CD8-positive, alpha-beta T cell (primary cell): ENCODE measurements at regions of chr13 and their contacts with region 1.

Region 1: DNA sequence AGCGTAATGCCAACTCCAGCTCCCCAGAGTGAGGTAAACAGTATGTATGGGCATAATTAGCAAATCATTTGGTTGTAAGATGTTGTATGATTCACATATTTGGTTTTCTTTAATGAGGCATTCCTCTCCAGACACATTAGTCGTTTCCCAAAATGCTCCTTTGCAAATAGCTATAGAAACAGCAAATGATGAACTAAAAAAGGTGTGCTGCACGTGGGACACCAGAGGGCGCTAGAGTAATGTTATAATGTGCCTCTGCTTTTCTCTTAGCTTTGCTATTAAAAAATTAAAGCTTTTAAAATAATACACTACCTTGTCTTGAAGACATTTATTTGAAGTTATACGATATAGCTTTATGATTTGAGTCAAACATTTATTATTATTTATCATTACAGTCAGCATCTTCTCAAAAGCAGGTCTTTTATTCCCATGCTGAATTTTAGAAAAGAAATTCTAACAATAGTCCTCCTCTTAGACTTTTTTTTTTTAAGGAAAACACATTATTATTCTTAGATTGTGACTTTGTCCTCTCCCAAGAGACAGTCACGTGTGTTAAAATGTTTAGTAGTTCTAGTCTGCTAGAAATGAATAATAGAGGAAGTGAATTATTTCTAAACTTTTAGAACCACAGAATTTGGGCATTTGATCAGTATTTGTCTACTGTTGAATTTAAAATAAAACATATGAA is 121.6 kb upstream of the FRY start:
- DNase-seq: peak; percentile 3 to 73 (median 53)
- ATAC-seq: peak; percentile 23
- H3K4me3 ChIP-seq: no peak overlapping the region
- H3K4me3 Mint-ChIP-seq: no peak overlapping the region
- H3K27ac ChIP-seq: no peak overlapping the region
- H3K27ac Mint-ChIP-seq: no peak overlapping the region
- H3K4me1 ChIP-seq: no peaks in the 10 kb centered on the region
- H3K4me1 Mint-ChIP-seq: no peaks in the 10 kb centered on the region
- H3K27me3 ChIP-seq: no peaks in the 10 kb centered on the region
- H3K27me3 Mint-ChIP-seq: peaks cover 12% of the 10 kb centered on the region
- CTCF ChIP-seq: peak; percentile 98

Region 2: GRCh38 chr13:32310134-32310706 is 400.2 kb after region 1 on chr13:
- CTCF ChIA-PET with region 1: interaction called, 7 read pairs
- POLR2A ChIA-PET with region 1: no interaction called
- intact Hi-C with region 1: loop called (anchors 1 to 2 kb)
- DNase-seq: peak in 4 of 9 experiments; percentile 16 to 67 (median 36)
- ATAC-seq: peak; percentile 43
- H3K4me3 ChIP-seq: no peak overlapping the region
- H3K4me3 Mint-ChIP-seq: peak overlapping the region; percentile 33
- H3K27ac ChIP-seq: no peak overlapping the region
- H3K27ac Mint-ChIP-seq: no peak overlapping the region
- H3K4me1 ChIP-seq: peaks cover 8% of the 10 kb centered on the region
- H3K4me1 Mint-ChIP-seq: peaks cover 17% of the 10 kb centered on the region
- H3K27me3 ChIP-seq: no peaks in the 10 kb centered on the region
- H3K27me3 Mint-ChIP-seq: no peaks in the 10 kb centered on the region
- CTCF ChIP-seq: peak; percentile 65

Region 3: GRCh38 chr13:32581177-32581786 is 671.3 kb after region 1 on chr13:
- CTCF ChIA-PET with region 1: interaction called, 14 read pairs
- POLR2A ChIA-PET with region 1: no interaction called
- intact Hi-C with region 1: loop called (anchors 2 to 5 kb)
- DNase-seq: peak in 2 of 9 experiments; percentile 29 to 50
- ATAC-seq: no peak
- H3K4me3 ChIP-seq: no peak overlapping the region
- H3K4me3 Mint-ChIP-seq: no peak overlapping the region
- H3K27ac ChIP-seq: no peak overlapping the region
- H3K27ac Mint-ChIP-seq: no peak overlapping the region
- H3K4me1 ChIP-seq: peaks cover 4% of the 10 kb centered on the region
- H3K4me1 Mint-ChIP-seq: peaks cover 7% of the 10 kb centered on the region
- H3K27me3 ChIP-seq: no peaks in the 10 kb centered on the region
- H3K27me3 Mint-ChIP-seq: no peaks in the 10 kb centered on the region
- CTCF ChIP-seq: peak; percentile 72

Region 4: DNA sequence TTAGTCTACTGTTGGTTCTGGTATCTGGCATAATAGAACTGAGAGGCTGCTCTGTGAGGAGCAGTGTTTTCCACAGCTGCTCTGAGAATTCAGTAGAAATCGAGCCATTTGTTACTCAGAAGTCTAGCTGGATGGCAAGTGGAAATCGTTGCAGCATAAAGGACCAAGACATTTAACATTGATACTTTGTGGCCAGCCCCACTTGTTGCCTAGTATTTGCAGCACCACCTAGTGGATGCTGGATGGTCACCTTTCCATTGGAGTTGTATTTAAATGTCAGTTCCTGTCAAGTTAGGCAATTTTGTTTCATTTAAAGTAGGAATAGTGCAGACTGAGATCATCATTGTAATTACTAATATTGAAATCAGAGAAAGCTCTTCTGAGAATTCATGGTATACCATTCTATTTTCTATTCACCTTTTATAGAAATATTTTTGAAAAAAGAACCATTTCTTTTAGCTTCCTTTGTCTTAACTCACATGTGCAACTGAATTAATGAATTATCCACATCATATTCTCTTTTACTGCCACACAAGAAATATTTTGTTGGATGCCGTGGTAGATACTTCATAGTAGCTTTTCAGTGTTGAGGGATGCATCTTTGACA is 740.8 kb after region 1 on chr13:
- CTCF ChIA-PET with region 1: no interaction called
- POLR2A ChIA-PET with region 1: no interaction called
- intact Hi-C with region 1: loop called (anchors 10 kb)
- DNase-seq: peak in 8 of 9 experiments; percentile 12 to 80 (median 56)
- ATAC-seq: peak; percentile 84
- H3K4me3 ChIP-seq: no peak overlapping the region
- H3K4me3 Mint-ChIP-seq: no peak overlapping the region
- H3K27ac ChIP-seq: no peak overlapping the region
- H3K27ac Mint-ChIP-seq: no peak overlapping the region
- H3K4me1 ChIP-seq: peaks cover 3% of the 10 kb centered on the region
- H3K4me1 Mint-ChIP-seq: peaks cover 37% of the 10 kb centered on the region
- H3K27me3 ChIP-seq: no peaks in the 10 kb centered on the region
- H3K27me3 Mint-ChIP-seq: no peaks in the 10 kb centered on the region
- CTCF ChIP-seq: peak; percentile 73

Region 5: GRCh38 chr13:32881074-32881780 is 971.2 kb after region 1 on chr13:
- CTCF ChIA-PET with region 1: no interaction called
- POLR2A ChIA-PET with region 1: no interaction called
- intact Hi-C with region 1: no loop called
- DNase-seq: no peak
- ATAC-seq: no peak
- H3K4me3 ChIP-seq: no peak overlapping the region
- H3K4me3 Mint-ChIP-seq: no peak overlapping the region
- H3K27ac ChIP-seq: no peak overlapping the region
- H3K27ac Mint-ChIP-seq: no peak overlapping the region
- H3K4me1 ChIP-seq: no peaks in the 10 kb centered on the region
- H3K4me1 Mint-ChIP-seq: no peaks in the 10 kb centered on the region
- H3K27me3 ChIP-seq: no peaks in the 10 kb centered on the region
- H3K27me3 Mint-ChIP-seq: no peaks in the 10 kb centered on the region
- CTCF ChIP-seq: no peak